AG04450 (cell line): ENCODE measurements at regions of chr12 and their contacts with region 1.

Region 1: DNA sequence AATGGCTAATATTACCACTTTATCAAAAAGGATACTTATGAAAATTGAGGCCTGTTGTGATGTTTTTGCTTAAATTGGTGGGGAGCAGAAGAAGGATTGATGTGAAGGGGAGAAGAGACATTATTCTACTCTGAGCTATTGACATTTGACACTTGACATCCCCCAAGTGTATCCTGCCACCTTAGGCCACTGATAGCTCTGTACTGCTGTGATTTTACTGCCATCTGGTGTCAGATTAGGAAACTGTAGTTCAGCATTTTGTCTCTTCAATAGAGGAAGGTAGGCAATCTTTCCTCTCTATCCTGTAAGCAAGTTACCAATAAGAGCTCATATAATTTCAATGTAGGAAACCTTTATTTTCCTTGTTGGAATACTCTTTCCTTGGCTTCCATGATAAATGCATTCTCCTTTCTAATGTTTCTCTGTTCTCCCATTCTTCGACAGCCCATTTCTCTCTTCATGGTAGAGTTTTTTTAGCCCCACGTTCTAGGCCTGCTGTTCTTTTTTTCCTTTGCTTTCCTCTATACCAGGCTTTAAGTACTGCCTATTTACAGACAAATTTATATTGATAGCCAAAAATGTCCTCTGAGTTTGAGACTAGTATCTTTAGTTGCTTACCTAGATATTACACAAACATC is 46.3 kb downstream of the PPHLN1 start:
- DNase-seq: no peak
- H3K4me3 ChIP-seq: no peak overlapping the region
- H3K27ac ChIP-seq: no peak overlapping the region
- H3K27me3 ChIP-seq: no peaks in the 10 kb centered on the region
- CTCF ChIP-seq: peak; percentile 82

Region 2: GRCh38 chr12:42338280-42338679 is 34.0 kb before region 1 on chr12:
- CTCF ChIA-PET with region 1: interaction called, 17 read pairs
- POLR2A ChIA-PET with region 1: no interaction called
- DNase-seq: no peak
- H3K4me3 ChIP-seq: no peak overlapping the region
- H3K27ac ChIP-seq: no peak overlapping the region
- H3K27me3 ChIP-seq: no peaks in the 10 kb centered on the region
- CTCF ChIP-seq: no peak

Region 3: GRCh38 chr12:42360747-42361403 is 11.4 kb before region 1 on chr12:
- CTCF ChIA-PET with region 1: interaction called, 24 read pairs
- POLR2A ChIA-PET with region 1: interaction called, 10 read pairs
- DNase-seq: no peak
- H3K4me3 ChIP-seq: no peak overlapping the region
- H3K27ac ChIP-seq: no peak overlapping the region
- H3K27me3 ChIP-seq: no peaks in the 10 kb centered on the region
- CTCF ChIP-seq: no peak

Region 4: GRCh38 chr12:42407306-42407705 is 35.0 kb after region 1 on chr12:
- CTCF ChIA-PET with region 1: interaction called, 11 read pairs
- POLR2A ChIA-PET with region 1: no interaction called
- DNase-seq: no peak
- H3K4me3 ChIP-seq: no peak overlapping the region
- H3K27ac ChIP-seq: no peak overlapping the region
- H3K27me3 ChIP-seq: no peaks in the 10 kb centered on the region
- CTCF ChIP-seq: no peak